ENCODE measurements at regions of chr2 and their contacts with region 1.

Region 1: GRCh38 chr2:189287982-189288521 is 108.5 kb upstream of the COL5A2 start:
- DNase-seq: peak; percentile 12
- H3K4me3 Mint-ChIP-seq: no peak overlapping the region
- H3K27ac Mint-ChIP-seq: no peak overlapping the region
- H3K4me1 Mint-ChIP-seq: peaks cover 7% of the 10 kb centered on the region
- H3K27me3 Mint-ChIP-seq: no peaks in the 10 kb centered on the region
- CTCF ChIP-seq: no peak

Region 2: DNA sequence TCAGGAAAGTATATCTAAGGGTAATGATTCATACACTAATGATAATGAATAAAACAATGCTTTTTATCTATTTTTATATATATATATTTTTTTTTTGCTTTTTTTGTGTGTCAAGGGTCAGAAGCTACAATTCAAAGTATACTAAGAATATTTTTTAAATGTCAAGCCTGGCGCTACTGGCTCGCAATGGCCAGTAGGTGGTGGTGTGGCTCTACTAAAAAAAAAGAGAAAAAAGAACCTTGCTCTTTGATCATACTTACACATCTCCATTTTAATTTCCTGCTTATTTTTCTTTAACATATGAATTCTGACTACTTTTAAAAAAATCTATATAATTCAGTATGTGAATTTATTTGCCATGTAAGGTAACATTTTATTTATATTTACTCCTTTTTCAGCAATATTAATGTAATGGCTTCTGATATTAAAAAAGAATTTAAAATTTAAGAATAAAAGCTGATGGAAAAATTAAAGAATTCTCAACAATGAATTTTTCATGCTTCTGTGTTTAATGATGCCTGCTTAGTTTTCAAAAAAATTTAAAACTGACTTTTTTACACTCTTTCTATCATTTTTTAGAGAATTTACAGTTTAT is 763.4 kb before region 1 on chr2:
- CTCF ChIA-PET with region 1: no interaction called
- intact Hi-C with region 1: loop called (anchors 5 kb)
- DNase-seq: peak; percentile 51
- H3K4me3 Mint-ChIP-seq: no peak overlapping the region
- H3K27ac Mint-ChIP-seq: no peak overlapping the region
- H3K4me1 Mint-ChIP-seq: peaks cover 4% of the 10 kb centered on the region
- H3K27me3 Mint-ChIP-seq: no peaks in the 10 kb centered on the region
- CTCF ChIP-seq: peak; percentile 62

Region 3: DNA sequence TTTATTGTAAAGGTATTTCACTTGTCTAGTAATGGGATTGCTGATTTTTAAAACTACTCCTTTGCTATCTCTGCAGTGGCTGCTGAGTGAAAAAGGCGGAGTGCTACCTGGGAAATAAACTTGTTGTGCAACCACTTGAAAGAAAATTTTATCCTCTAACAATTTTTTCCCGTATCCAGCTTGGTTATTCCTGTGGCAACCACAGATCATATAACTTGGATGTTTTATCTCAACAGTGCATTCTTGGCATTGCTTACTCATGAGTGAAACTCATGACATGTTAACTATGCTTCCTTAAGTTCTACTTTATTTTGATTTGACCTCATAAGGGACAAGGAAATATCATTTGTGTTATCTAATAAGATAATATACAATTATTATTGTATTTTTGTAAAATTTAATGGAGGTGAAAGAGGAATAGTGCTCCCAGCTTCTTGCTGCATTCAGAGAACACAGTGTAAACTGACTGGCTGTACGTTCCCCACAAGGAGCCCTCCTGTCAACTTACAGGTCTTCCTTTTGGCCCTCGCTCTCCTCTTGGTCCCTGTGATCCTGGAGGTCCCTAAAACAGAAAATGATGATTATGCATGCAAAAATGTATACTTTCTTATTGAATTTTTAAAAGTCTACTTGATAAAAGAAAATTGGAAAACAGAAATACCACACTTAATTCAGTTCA is 191.1 kb before region 1 on chr2:
- CTCF ChIA-PET with region 1: interaction called, 5 read pairs
- intact Hi-C with region 1: loop called (anchors 1 kb)
- DNase-seq: peak; percentile 12
- H3K4me3 Mint-ChIP-seq: no peak overlapping the region
- H3K27ac Mint-ChIP-seq: peak overlapping the region; percentile 19
- H3K4me1 Mint-ChIP-seq: peaks cover 20% of the 10 kb centered on the region
- H3K27me3 Mint-ChIP-seq: no peaks in the 10 kb centered on the region
- CTCF ChIP-seq: no peak

Region 4: DNA sequence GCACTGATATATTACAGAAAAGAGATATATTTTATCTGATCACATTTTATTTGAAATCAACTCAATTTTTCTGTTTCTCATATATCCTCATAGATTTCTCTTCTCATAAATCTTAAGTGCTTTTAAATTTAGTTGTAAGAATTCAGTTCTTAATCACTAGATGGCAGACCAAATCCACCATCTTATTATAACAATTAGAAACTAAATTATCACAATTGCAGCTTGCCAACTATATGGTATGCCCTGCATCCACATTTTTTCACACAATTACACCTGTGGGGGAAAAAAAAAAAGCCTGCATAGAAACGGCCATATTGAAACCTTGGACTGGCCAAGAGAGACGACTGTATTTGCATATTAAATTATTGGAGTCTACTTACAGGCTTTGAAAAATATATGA is 172.9 kb before region 1 on chr2:
- CTCF ChIA-PET with region 1: interaction called, 8 read pairs
- intact Hi-C with region 1: loop called (anchors 1 kb)
- DNase-seq: no peak
- H3K4me3 Mint-ChIP-seq: no peak overlapping the region
- H3K27ac Mint-ChIP-seq: no peak overlapping the region
- H3K4me1 Mint-ChIP-seq: peaks cover 16% of the 10 kb centered on the region
- H3K27me3 Mint-ChIP-seq: no peaks in the 10 kb centered on the region
- CTCF ChIP-seq: no peak

Region 5: GRCh38 chr2:189142893-189143759 is 144.9 kb before region 1 on chr2:
- CTCF ChIA-PET with region 1: interaction called, 22 read pairs
- intact Hi-C with region 1: loop called (anchors 1 kb)
- DNase-seq: peak; percentile 63
- H3K4me3 Mint-ChIP-seq: no peak overlapping the region
- H3K27ac Mint-ChIP-seq: no peak overlapping the region
- H3K4me1 Mint-ChIP-seq: no peaks in the 10 kb centered on the region
- H3K27me3 Mint-ChIP-seq: no peaks in the 10 kb centered on the region
- CTCF ChIP-seq: peak; percentile 94

Region 6: DNA sequence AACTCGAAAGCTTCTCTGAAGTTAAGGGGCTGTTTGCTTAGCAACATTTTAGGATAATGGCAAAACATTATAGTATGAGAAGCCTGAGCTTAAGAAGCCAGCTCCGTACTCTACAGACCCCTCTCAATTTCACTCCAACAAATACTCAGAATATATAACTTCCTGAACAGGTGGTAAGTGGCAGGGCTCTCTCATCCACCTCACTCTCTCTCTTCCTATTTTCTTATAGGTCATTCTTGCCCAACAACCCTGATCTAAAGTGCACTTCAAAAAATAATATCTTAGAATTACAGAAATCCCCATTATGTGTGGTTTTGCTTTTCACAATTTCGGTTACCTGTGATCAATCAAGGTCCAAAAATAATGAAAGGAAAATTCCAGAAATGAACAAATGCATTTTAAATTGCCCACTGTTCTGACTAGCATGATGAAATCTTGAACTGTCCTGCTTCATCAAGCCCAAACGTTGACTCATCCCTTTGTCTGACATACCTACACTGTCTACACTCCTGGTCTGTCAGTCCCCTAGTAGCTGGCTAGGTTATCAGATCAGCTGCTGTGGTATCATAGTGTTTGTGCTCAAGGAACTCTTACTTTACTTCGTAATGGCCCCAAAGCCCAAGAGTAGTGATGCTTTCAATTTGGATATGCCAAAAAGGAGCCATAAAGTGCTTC is 14.4 kb after region 1 on chr2:
- CTCF ChIA-PET with region 1: no interaction called
- intact Hi-C with region 1: no loop called
- DNase-seq: no peak
- H3K4me3 Mint-ChIP-seq: no peak overlapping the region
- H3K27ac Mint-ChIP-seq: no peak overlapping the region
- H3K4me1 Mint-ChIP-seq: peaks cover 12% of the 10 kb centered on the region
- H3K27me3 Mint-ChIP-seq: no peaks in the 10 kb centered on the region
- CTCF ChIP-seq: no peak

Measured in Calu3 (cell line).